Uterus (tissue), 4 donors: ENCODE measurements at regions of chr18 and their contacts with region 1.

Region 1: GRCh38 chr18:49861659-49862058 is 48.3 kb upstream of the ACAA2 start:
- DNase-seq: no peak
- H3K4me3 ChIP-seq: no peak overlapping the region
- H3K27ac ChIP-seq: no peak overlapping the region
- H3K4me1 ChIP-seq: no peaks in the 10 kb centered on the region
- H3K27me3 ChIP-seq: no peaks in the 10 kb centered on the region
- CTCF ChIP-seq: peak in 1 of 4 experiments; percentile 9
- POLR2A ChIP-seq: no peak

Region 2: DNA sequence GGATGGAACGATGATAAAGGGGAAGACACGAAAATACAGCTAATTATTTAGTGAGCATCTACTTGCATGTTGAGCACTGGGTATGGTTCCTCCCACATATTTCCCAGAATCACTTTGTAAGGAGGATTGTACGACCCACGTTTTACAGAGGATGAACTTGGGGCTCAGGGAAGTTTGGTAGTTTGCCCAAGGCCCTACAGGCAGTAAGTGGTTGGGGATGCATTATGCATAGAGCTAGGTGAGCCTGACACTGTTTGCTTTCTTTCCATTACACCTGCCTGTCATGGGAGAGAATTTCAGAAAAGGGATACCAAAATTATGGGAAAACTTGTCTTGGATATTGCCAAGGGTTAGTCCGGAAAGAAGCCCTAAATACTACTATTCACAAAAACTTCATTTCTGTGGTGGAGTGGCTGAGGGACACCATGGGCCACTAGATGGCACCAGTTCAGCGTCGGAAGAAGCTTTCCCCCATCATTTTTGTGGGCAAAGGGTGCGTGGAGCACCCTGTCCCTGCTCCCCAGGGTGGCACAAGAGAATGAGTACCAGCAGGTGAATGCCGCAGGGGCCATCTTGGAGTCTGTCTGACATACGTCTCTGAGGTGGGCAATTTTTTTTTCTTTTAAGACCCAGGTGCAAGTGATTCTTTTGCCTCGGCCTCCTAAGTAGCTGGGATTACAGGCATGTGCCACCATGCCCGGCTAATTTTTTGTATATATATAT is 351.1 kb before region 1 on chr18:
- intact Hi-C with region 1: loop called (anchors 10 kb)
- DNase-seq: peak in 1 of 2 donors; percentile 32
- H3K4me3 ChIP-seq: no peak overlapping the region
- H3K27ac ChIP-seq: no peak overlapping the region
- H3K4me1 ChIP-seq: no peaks in the 10 kb centered on the region
- H3K27me3 ChIP-seq: no peaks in the 10 kb centered on the region
- CTCF ChIP-seq: peak; percentile 58 to 69 (median 62)
- POLR2A ChIP-seq: no peak